Activated T-helper 2 cell treated with anti-CD3 and anti-CD28 coated beads, Interferon-gamma antibody, Interleukin-2, Interleukin-4, amounts not matched to agents 10 μg/mL and 5 μg/mL and 100 μg/mL, durations not matched to agents 14 hours and 24 hours and 36 hours (primary cell): ENCODE measurements at regions of chr1 and their contacts with region 1.

Region 1: GRCh38 chr1:182149411-182149965 is 88.0 kb upstream of the ZNF648 start:
- DNase-seq: peak; percentile 38
- H3K4me3 Mint-ChIP-seq: no peak overlapping the region
- H3K27ac Mint-ChIP-seq: peak overlapping the region; percentile 72
- H3K4me1 Mint-ChIP-seq: peaks cover 41% of the 10 kb centered on the region
- H3K27me3 Mint-ChIP-seq: no peaks in the 10 kb centered on the region

Region 2: DNA sequence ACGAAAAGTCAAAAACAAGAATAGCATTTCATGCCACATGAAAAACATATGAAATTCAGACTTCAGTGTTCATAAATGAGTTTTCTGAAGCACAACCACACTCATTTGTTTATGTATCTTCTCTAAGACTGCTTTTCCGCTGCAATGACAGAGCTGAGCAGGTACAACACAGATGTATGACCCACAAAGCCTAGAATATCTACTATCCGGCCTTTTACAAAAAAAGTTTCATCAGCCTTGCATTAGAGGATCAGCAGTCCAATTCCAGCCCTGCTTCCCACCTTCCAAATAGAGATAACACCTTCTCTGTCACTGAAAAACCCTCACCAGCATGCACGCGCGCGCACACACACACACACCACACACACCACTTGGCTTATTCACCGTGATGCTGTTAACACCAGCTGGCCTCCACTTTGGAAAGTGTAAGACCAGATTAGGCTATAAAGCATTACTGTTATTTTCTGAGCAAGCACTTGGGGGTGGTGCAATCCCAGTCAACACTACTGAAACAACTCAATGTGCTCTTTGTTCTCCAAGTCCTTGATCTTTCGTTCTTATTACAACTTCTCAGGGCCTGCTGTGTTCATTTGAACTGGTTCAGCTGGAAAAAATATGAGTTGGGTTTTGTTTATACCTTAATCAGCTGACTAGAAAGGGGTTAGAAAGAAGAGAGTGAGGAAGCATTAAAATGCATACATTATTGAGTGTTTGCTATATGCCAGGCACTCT is 152.1 kb after region 1 on chr1:
- intact Hi-C with region 1: loop called (anchors 2 kb)
- DNase-seq: no peak
- H3K4me3 Mint-ChIP-seq: no peak overlapping the region
- H3K27ac Mint-ChIP-seq: peak overlapping the region; percentile 33
- H3K4me1 Mint-ChIP-seq: peaks cover 26% of the 10 kb centered on the region
- H3K27me3 Mint-ChIP-seq: no peaks in the 10 kb centered on the region